ENCODE measurements at regions of chr2 and their contacts with region 1.

Region 1: GRCh38 chr2:86562922-86563649 is at the start of gene CHMP3:
- DNase-seq: peak; percentile 94
- ATAC-seq: peak; percentile 94
- H3K4me3 ChIP-seq: peak within 1 kb of the TSS; percentile 89
- H3K27ac ChIP-seq: peak within 1 kb of the TSS; percentile 99
- H3K4me1 ChIP-seq: peaks cover 5% of the 10 kb centered on the region
- H3K27me3 ChIP-seq: no peaks in the 10 kb centered on the region
- CTCF ChIP-seq: no peak
- EP300 ChIP-seq: peak in 1 of 2 experiments; percentile 59; a peak in 1 of 4 replicates
- POLR2A ChIP-seq: peak; percentile 93
- RAD21 ChIP-seq: no peak
- polyA plus RNA-seq, gene CHMP3: 24.1 to 27.6 TPM

Region 2: DNA sequence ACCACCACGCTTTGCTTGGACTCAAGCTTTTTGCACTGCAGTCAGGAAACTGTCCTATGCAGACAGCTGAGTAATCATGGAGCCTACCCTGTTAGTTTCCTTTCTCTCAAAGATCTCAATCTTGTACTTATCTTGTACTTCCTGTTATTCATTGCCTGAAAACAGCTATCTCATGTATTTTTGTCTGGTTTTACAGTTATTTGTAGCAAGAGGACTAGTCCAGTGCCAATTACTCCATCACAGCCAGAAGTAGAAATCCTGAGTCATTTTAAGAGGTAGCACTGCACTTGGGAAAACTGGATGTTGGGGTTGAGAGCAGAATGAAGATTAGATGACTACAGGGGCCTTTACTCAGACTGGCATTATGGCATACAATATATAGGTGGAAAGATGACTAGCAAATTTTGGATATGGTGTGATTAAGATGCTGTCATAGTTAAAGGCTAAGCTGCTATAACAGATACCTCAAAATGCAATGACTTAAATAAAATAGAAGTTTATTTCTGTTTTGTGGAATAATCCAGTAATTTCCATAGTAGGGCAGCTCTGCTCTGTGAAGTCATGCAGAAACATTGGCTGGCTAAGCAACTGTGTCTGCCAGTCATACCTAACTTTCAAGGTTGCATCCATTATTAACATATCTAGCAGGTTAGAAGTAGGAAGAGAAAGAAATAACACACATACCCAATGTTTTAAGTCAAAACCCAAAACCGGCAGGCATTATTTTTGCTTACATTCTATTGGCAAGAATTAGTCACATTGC is 21.2 kb after region 1 on chr2:
- CTCF ChIA-PET with region 1: no interaction called
- POLR2A ChIA-PET with region 1: no interaction called
- RAD21 ChIA-PET with region 1: no interaction called
- SMC1A ChIA-PET with region 1: no interaction called
- in situ Hi-C with region 1: no loop called
- intact Hi-C with region 1: no loop called
- DNase-seq: no peak
- ATAC-seq: peak; percentile 69
- H3K4me3 ChIP-seq: no peak overlapping the region
- H3K27ac ChIP-seq: no peak overlapping the region
- H3K4me1 ChIP-seq: no peaks in the 10 kb centered on the region
- H3K27me3 ChIP-seq: no peaks in the 10 kb centered on the region
- CTCF ChIP-seq: no peak
- EP300 ChIP-seq: no peak
- POLR2A ChIP-seq: no peak
- RAD21 ChIP-seq: no peak

Region 3: GRCh38 chr2:86623651-86624541 is 60.8 kb after region 1 on chr2 and contains the start of gene RNF103:
- CTCF ChIA-PET with region 1: no interaction called
- POLR2A ChIA-PET with region 1: interaction called, 13 read pairs
- RAD21 ChIA-PET with region 1: no interaction called
- SMC1A ChIA-PET with region 1: interaction called, 5 read pairs
- in situ Hi-C with region 1: no loop called
- intact Hi-C with region 1: loop called (anchors 2 kb)
- DNase-seq: peak; percentile 42
- ATAC-seq: peak; percentile 89
- H3K4me3 ChIP-seq: peak within 1 kb of the TSS; percentile 95
- H3K27ac ChIP-seq: peak within 1 kb of the TSS; percentile 90
- H3K4me1 ChIP-seq: peaks cover 3% of the 10 kb centered on the region
- H3K27me3 ChIP-seq: no peaks in the 10 kb centered on the region
- CTCF ChIP-seq: no peak
- EP300 ChIP-seq: 0 out of 4 replicates have a peak, but pooled peaks of 1 of the 2 experiments have one; percentile 8
- POLR2A ChIP-seq: peak; percentile 90
- RAD21 ChIP-seq: no peak
- polyA plus RNA-seq, gene RNF103: 2.4 to 2.5 TPM

Region 4: GRCh38 chr2:86800856-86801567 is 237.9 kb after region 1 on chr2:
- CTCF ChIA-PET with region 1: no interaction called
- POLR2A ChIA-PET with region 1: no interaction called
- RAD21 ChIA-PET with region 1: no interaction called
- SMC1A ChIA-PET with region 1: no interaction called
- in situ Hi-C with region 1: no loop called
- intact Hi-C with region 1: no loop called
- DNase-seq: no peak
- ATAC-seq: no peak
- H3K4me3 ChIP-seq: no peak overlapping the region
- H3K27ac ChIP-seq: no peak overlapping the region
- H3K4me1 ChIP-seq: no peaks in the 10 kb centered on the region
- H3K27me3 ChIP-seq: peaks cover 0 to under 1% of the 10 kb centered on the region in 2 experiments; a peak in 1 of 4 replicates
- CTCF ChIP-seq: no peak
- EP300 ChIP-seq: no peak
- POLR2A ChIP-seq: no peak
- RAD21 ChIP-seq: no peak

Measured in GM12878 (cell line).